PC-3 (cell line): ENCODE measurements at regions of chr19 and their contacts with region 1.

Region 1: DNA sequence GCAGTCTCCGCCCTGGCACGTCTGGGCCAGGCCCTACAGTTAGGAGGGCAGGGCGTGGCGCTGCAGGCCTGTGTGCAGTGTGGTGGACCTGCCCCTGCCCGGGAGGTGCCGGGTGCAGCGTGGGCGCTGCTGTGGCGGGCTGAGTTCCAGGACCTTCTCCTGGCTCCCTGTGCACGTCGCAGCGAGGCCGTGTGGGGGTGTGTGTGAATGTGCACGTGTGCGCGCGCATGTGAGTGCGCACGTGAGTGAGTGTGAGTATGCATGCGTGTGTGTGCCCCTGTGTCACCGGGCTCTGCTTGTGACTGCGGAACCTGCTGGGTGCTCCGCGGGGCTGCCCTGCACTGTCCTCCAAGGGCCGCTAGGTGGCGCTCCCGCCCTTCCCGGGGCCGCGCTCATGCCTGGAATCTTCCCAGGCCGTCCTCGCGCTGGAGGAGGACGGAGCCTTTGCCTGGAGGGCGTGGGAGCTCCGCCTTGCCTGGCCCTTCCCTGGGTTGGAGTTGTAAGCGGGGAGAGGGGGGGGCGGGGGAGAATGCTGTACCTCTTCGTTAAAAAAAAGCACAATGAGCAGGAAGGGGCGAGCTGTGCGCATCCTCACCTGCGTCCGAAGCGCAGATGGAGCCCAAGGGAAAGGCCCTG is 79.3 kb downstream of the KDM4B start:
- DNase-seq: peak; percentile 92
- ATAC-seq: peak; percentile 55
- H3K4me3 ChIP-seq: peak overlapping the region; percentile 33
- H3K27ac ChIP-seq: peak overlapping the region; percentile 87
- H3K4me1 ChIP-seq: peaks cover 48% of the 10 kb centered on the region
- H3K27me3 ChIP-seq: no peaks in the 10 kb centered on the region
- CTCF ChIP-seq: peak; percentile 98

Region 2: GRCh38 chr19:5154129-5154798 is 106.1 kb after region 1 on chr19:
- CTCF ChIA-PET with region 1: no interaction called
- POLR2A ChIA-PET with region 1: no interaction called
- intact Hi-C with region 1: no loop called
- DNase-seq: peak; percentile 39
- ATAC-seq: peak; percentile 66
- H3K4me3 ChIP-seq: no peak overlapping the region
- H3K27ac ChIP-seq: no peak overlapping the region
- H3K4me1 ChIP-seq: no peaks in the 10 kb centered on the region
- H3K27me3 ChIP-seq: no peaks in the 10 kb centered on the region
- CTCF ChIP-seq: peak; percentile 67

Region 3: GRCh38 chr19:5170329-5170745 is 122.1 kb after region 1 on chr19:
- CTCF ChIA-PET with region 1: no interaction called
- POLR2A ChIA-PET with region 1: no interaction called
- intact Hi-C with region 1: loop called (anchors 5 kb)
- DNase-seq: no peak
- ATAC-seq: no peak
- H3K4me3 ChIP-seq: no peak overlapping the region
- H3K27ac ChIP-seq: no peak overlapping the region
- H3K4me1 ChIP-seq: peaks cover 51% of the 10 kb centered on the region
- H3K27me3 ChIP-seq: no peaks in the 10 kb centered on the region
- CTCF ChIP-seq: peak; percentile 79

Region 4: GRCh38 chr19:5225486-5226345 is 177.5 kb after region 1 on chr19:
- CTCF ChIA-PET with region 1: no interaction called
- POLR2A ChIA-PET with region 1: no interaction called
- intact Hi-C with region 1: loop called (anchors 5 kb)
- DNase-seq: no peak
- ATAC-seq: no peak
- H3K4me3 ChIP-seq: no peak overlapping the region
- H3K27ac ChIP-seq: no peak overlapping the region
- H3K4me1 ChIP-seq: peaks cover 15% of the 10 kb centered on the region
- H3K27me3 ChIP-seq: no peaks in the 10 kb centered on the region
- CTCF ChIP-seq: peak; percentile 71

Region 5: DNA sequence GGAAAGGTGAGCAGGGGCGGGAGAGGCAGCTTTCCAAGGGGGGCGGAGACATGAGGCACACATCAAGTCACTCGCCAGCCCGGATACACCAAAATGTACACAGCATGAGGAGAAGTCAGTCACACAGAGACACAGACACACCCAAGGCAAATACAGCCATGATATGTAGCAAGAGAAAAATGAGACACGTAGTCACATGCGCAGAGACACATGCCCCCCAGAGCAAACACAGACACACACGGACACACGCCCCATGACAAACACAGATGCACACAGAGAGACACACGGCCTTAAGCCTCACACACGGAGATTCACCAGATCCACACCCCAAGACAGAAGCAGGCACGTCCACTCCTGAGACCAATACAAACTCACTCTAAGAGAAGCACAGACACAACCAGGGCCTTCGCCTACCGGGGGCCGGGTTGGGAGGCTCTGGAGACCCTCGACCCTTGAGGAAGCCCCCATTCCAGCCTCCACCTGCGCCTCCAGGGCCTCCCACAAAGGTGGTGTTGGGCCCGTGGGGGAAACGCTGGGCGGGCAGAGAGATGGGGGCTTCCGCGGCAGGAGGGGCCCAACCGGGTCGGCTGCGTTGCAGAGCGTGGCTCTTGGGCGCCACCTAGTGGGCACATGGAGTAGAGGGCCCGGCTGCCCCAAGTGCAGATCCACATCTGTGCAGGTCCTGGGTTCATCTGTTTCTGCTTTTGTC is 529.7 kb after region 1 on chr19:
- CTCF ChIA-PET with region 1: no interaction called
- POLR2A ChIA-PET with region 1: no interaction called
- intact Hi-C with region 1: loop called (anchors 1 kb)
- DNase-seq: peak; percentile 95
- ATAC-seq: peak; percentile 83
- H3K4me3 ChIP-seq: peak overlapping the region; percentile 67
- H3K27ac ChIP-seq: peak overlapping the region; percentile 83
- H3K4me1 ChIP-seq: peaks cover 5% of the 10 kb centered on the region; the same call in 1 of the 2 replicates
- H3K27me3 ChIP-seq: no peaks in the 10 kb centered on the region
- CTCF ChIP-seq: peak; percentile 99